ENCODE measurements at regions of chr9 and their contacts with region 1.

Region 1: DNA sequence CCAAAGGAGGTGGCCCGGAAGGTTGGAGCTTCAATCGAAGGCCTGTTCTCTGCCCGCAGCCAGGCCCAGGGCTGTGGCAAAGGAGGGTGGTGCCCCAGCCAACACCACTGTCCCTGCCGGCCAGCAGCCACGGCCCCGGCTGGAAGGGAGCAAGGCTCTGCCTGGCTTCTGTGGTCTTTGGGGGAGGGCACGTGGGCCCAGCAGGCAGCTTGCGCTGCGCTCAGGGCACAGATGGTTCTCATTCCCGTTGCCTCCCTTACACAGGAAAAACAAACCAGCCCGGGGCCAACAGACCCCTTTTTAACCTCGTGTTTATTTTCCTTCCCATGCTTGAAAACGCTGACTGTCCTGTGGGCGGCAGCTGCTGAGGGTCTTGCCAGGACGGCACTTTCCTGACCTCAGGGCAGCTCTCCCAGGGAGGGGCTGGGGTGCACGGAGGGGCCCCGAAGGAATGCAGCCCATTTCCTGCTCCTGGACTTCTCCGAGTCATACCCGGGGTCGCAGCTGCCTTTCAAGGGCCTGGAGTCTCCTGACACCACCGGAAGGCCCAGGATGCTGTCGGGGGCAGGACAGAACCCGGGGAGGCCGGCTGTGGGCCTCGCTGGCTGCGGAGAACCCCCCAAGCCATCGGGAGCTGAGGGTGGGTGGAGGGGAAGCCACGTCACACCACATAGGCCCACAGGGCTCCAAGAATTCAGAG is 1.1 kb upstream of the GPSM1 start:
- DNase-seq: peak; percentile 90
- H3K4me3 ChIP-seq: peak overlapping the region; percentile 31
- H3K27ac ChIP-seq: peak overlapping the region; percentile 100
- H3K27me3 ChIP-seq: no peaks in the 10 kb centered on the region
- CTCF ChIP-seq: no peak; the same call in 1 of the 2 replicates

Region 2: GRCh38 chr9:136133191-136133958 is 192.8 kb before region 1 on chr9:
- CTCF ChIA-PET with region 1: no interaction called
- POLR2A ChIA-PET with region 1: no interaction called
- DNase-seq: no peak
- H3K4me3 ChIP-seq: peak overlapping the region; percentile 41
- H3K27ac ChIP-seq: no peak overlapping the region
- H3K27me3 ChIP-seq: peaks cover 66% of the 10 kb centered on the region
- CTCF ChIP-seq: peak; percentile 41

Region 3: GRCh38 chr9:136336156-136336870 is 10.1 kb after region 1 on chr9:
- CTCF ChIA-PET with region 1: no interaction called
- POLR2A ChIA-PET with region 1: interaction called, 15 read pairs
- DNase-seq: no peak
- H3K4me3 ChIP-seq: no peak overlapping the region
- H3K27ac ChIP-seq: peak overlapping the region; percentile 52
- H3K27me3 ChIP-seq: no peaks in the 10 kb centered on the region
- CTCF ChIP-seq: no peak

Region 4: DNA sequence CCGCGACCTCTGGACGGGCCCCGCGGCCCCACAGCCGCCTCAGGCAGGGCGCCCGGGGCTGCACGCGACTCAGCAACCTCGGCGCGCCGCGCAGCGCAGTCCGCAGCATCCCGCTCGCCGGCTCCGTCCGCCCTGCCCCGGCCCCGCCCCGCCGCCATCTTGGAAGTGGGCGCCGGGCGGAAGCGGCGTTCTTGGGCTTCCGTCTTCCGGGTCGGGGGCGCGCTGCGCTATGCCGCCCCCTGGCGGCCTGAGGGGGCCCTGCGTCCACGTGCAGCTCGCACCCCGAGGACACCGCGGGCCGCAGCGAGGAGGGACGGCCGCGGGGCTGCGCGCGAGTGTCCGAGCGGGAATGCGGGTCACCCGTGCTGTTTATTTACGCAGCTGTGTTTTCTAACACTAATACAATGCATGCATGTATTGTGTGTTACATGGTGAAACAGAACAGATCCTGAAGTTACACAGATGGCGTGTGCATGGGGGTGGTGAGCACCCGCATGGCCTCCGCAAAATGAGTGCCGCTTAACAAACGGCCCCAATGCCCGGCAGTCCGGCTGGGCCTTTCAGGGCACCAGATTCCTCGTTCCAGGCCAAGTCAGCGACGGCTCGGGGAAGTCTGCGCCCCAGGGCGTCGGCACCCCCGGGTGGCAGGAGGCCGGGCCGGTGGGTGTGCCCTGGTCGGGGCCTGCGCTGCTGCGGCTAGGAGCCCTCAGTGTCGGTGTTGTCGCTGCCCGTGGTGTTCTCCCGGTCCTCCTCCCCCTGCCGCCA is 37.6 kb after region 1 on chr9 and contains the start of gene DNLZ:
- CTCF ChIA-PET with region 1: interaction called, 6 read pairs
- POLR2A ChIA-PET with region 1: interaction called, 10 read pairs
- DNase-seq: peak; percentile 60
- H3K4me3 ChIP-seq: peak within 1 kb of the TSS; percentile 72
- H3K27ac ChIP-seq: peak within 1 kb of the TSS; percentile 65
- H3K27me3 ChIP-seq: no peaks in the 10 kb centered on the region
- CTCF ChIP-seq: peak; percentile 81
- polyA plus RNA-seq, gene DNLZ: 3.7 and 4.7 TPM in 2 replicates